Left cardiac atrium (tissue), 4 donors: ENCODE measurements at regions of chr10 and their contacts with region 1.

Region 1: GRCh38 chr10:78672918-78673317 is 395.8 kb upstream of the ZMIZ1 start:
- DNase-seq: no peak
- ATAC-seq: no peak

Region 2: DNA sequence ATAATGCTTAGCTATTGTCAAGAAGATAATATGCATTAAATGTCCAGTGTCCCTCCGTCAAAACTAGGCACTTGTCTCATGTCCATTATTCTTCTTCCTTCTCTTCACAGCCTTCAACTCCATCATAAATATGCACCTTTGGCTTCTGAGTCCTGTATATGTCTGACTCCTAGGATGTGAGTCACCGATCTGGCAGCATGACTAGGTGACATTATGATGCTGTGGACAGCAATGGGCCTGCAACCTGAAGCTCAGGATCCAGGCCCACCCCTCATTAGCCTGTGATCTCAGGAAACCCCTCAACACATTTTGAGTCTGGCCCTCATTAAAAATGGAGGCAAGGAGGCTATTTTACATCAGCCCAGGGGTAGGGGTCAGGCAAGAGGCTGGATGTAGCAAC is 33.3 kb after region 1 on chr10:
- intact Hi-C with region 1: loop called in 1 of 2 experiments (anchors 5 kb)
- DNase-seq: no peak
- ATAC-seq: peak in 1 of 2 donors; percentile 47